GM10248 (cell line): ENCODE measurements at regions of chr12 and their contacts with region 1.

Region 1: DNA sequence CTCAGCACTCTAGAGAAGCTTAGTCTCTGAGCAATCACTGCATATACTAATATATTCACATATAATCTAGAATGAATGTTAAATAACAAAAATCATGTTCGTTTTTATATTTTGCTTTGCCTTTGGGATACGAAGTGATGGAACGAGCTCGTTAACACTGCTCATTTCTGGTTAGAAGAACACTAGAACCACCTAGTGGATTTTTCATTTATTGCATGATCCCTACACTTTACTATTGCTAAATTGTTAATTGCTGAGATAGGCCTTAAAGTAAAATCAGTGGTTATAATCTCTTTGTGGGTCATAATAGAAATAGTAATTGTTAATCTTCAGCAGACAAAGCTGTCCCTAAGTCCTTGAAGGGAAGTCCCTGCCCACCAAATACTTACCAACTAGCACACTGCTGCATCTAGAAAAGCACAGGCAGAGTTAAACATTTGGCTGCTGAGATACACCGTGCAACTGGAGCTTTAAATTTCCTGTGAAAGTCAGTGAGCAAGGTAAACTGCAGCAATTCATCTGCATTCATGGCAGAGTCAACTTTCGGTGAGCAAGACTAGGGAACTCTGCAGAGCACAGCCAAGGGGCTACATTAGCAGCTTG is 353.7 kb downstream of the APAF1 start:
- DNase-seq: peak; percentile 57
- CTCF ChIP-seq: peak; percentile 63

Region 2: DNA sequence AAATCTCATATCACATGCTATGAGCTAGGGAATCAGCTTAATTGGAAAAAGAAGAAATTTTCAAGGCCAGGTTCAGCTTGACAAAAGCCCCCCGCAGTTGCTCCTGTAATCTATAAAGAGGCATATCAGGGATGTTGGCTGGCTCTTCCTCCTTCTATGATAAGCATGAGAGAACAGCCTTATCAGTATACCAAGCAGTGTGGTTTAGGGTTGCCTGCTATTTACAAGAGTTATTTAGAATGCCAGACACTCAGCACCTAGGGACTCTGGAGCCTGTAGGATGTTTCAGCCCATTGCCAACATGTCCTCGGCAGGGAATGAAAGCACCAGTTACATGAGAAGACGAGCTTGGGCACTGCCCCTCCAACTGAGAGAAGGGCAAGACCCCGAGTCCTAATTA is 572.9 kb before region 1 on chr12:
- CTCF ChIA-PET with region 1: interaction called, 10 read pairs
- POLR2A ChIA-PET with region 1: no interaction called
- DNase-seq: no peak
- CTCF ChIP-seq: no peak

Region 3: DNA sequence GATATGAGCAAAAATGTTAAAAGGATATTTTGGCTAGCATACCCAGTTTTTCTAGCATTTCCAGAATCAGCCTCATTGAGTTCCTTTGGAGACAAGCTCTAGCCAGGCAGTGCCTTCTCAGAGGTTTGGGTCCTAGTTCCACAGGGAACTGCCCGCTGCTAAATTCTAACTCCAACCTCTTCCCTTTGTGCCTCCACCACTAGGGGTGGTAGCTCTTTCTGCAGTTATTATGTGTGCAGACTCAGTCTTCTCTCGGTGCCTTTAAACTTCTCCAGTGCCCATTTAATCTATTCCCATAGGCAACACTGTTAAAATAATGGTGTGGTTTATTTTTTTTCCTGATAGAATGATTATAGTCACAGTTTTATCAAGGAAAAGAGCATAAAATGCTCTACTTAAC is 426.8 kb before region 1 on chr12:
- CTCF ChIA-PET with region 1: interaction called, 18 read pairs
- POLR2A ChIA-PET with region 1: no interaction called
- DNase-seq: no peak
- CTCF ChIP-seq: no peak

Region 4: DNA sequence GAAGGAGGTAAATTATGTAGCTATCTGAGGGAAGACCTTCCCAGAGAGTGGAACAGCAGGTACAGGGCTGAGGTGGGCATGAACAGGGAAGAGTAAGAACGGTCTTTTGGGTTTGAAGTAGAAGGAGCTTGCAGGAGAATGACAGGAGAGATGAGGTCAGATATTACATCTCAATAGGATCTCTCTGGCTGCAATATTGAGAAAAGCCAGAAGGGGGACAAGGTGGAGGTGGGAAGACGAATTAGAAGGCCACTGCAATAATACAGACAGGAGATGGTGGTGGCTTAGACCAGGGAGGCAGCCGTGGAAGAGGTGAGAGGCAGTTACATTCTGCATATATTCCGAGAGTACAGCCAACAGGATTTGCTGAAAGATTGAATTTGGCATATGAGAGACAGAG is 43.5 kb before region 1 on chr12:
- CTCF ChIA-PET with region 1: interaction called, 48 read pairs
- POLR2A ChIA-PET with region 1: no interaction called
- DNase-seq: peak; percentile 22
- CTCF ChIP-seq: peak; percentile 34

Region 5: GRCh38 chr12:99009654-99010296 is 11.0 kb after region 1 on chr12:
- CTCF ChIA-PET with region 1: interaction called, 22 read pairs
- POLR2A ChIA-PET with region 1: no interaction called
- DNase-seq: no peak
- CTCF ChIP-seq: no peak